Activated T-helper 2 cell treated with anti-CD3 and anti-CD28 coated beads, Interferon-gamma antibody, Interleukin-2, Interleukin-4, amounts not matched to agents 10 μg/mL and 5 μg/mL and 100 μg/mL, durations not matched to agents 14 hours and 24 hours and 36 hours (primary cell): ENCODE measurements at regions of chr5 and their contacts with region 1.

Region 1: DNA sequence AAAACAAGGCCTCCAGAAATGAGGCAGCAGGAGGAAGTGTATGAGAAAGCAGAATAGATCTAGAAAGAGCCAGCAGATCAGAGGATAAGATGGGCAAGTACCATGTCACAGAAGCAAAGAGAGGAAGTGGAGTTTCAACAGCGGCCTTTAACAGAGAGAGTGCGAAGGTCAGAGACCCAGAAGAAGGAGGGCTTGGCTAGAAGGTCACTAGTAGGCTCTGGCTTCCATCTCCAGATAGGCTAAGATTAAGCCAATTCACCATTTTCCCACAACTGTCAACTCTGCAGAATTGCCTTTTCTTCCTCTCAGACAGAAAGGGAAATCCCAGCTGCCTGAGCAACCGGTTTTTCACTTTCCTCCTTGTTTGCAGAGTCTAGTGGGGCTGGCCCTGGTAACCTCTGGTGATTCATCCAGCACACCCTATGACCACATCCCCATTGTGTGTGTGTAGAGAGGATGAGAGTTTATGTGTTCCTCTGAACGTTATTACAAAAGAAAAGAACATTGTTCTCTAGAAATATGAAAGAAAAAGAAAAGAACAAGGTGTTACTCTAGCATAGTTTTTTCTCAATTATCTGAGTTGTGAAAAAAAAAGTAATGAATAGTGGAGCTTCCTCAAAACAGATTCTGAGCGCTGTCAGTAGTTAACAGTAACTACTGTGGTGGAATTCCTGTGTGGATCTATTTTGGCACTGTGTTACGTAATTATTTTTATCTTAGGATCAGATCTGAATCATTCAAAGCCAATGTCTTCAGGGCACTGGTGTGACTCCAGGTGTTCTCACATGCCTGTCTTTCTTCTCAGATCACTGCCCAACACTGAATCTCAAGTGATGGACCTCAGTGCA is 220.4 kb downstream of the ARRDC3 start:
- DNase-seq: peak; percentile 64
- H3K4me3 Mint-ChIP-seq: peak overlapping the region; percentile 27
- H3K27ac Mint-ChIP-seq: peak overlapping the region; percentile 77
- H3K4me1 Mint-ChIP-seq: peaks cover 39% of the 10 kb centered on the region
- H3K27me3 Mint-ChIP-seq: no peaks in the 10 kb centered on the region

Region 2: DNA sequence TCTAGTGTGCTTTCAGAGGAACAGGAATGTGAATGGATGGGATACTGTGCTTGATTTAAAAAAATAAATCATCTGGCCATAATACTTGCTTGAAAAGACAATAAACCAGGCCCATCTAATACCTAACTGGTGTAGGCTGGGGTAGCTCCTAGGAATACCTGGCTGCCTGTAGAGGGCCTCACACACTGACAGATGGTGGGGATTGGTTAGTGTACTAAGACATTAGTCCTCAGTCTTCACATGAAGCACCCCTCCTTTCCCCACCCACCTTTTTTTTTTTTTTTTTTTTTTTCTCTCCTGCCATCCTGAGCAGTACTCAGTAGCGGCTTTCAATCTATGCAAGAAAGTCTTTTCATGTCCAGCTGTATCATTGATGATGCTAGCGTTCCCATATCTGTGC is 473.7 kb before region 1 on chr5:
- intact Hi-C with region 1: no loop called
- DNase-seq: no peak
- H3K4me3 Mint-ChIP-seq: no peak overlapping the region
- H3K27ac Mint-ChIP-seq: no peak overlapping the region
- H3K4me1 Mint-ChIP-seq: no peaks in the 10 kb centered on the region
- H3K27me3 Mint-ChIP-seq: no peaks in the 10 kb centered on the region

Region 3: DNA sequence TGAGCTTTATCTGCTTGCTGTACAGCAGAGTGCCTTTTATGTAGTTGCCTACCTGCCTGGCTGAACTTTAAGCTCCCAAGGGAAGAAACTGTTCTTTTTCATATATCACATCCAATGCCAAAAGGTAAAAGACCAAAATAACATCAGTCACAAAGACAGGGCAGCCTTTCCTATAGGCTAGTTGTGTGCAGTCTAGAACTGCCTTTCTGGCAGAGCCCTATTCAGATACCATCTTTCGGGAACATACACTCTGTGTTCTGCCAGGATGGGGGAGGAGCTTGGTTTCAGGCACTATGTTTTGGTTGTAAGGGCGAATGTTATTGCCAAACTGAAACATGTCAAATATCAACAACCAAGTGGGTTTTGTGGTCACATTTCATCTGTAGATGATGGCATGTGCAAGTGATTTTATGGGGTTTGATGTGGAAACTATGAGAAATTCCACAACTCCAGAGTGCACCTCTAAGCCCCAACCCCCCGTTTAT is 289.7 kb before region 1 on chr5:
- intact Hi-C with region 1: loop called (anchors 2 kb)
- DNase-seq: no peak
- H3K4me3 Mint-ChIP-seq: no peak overlapping the region
- H3K27ac Mint-ChIP-seq: peak overlapping the region; percentile 18
- H3K4me1 Mint-ChIP-seq: peaks cover 39% of the 10 kb centered on the region
- H3K27me3 Mint-ChIP-seq: peaks cover 35% of the 10 kb centered on the region

Region 4: DNA sequence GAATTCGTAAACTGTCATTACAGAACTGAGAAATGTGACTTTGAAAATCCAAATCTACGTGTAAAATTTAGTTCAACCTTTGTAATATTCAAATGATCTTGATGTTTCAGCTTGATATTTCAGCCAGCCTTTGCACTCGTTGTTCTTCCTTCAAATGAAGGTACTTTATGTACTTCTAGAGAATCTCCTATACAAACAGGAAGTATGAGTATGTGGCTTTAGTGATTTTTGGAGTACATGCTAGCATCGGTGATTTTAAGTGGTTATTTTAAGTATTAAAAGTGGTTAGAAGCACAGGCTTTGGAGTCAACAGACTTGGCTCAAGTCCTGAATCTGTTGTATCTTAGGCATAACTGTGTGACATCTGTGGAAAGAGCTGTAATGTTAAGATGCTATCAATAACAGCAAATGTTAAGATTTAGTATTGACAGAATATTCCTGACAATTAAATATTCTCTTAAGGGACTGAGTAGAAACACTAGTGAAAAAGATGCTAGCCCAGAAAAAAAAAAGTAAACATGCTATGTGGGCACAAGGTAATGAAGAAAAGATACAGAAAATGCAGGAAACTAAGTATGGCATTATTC is 206.2 kb before region 1 on chr5:
- intact Hi-C with region 1: loop called (anchors 2 kb)
- DNase-seq: no peak
- H3K4me3 Mint-ChIP-seq: peak overlapping the region; percentile 1
- H3K27ac Mint-ChIP-seq: peak overlapping the region; percentile 91
- H3K4me1 Mint-ChIP-seq: peaks cover 22% of the 10 kb centered on the region
- H3K27me3 Mint-ChIP-seq: no peaks in the 10 kb centered on the region

Region 5: DNA sequence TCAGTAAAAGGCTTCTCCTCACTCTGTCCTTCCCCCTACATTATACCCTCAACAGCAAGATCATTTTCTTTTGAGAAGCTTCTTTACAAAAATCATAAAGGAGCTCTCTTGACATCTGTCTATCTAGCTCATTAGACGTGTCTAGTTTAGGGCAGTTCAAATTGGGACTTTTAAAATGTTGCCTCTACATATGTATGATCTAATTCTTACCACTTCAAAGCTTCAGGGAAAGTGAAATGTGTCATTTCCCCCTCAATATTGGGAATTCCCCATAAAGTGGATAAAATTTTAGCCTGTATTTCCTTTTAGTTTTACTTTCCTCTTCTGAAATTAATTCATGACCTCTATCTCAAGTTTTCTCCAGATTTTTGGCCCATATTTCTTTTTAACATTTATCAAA is 103.3 kb before region 1 on chr5:
- intact Hi-C with region 1: loop called (anchors 1 kb)
- DNase-seq: no peak
- H3K4me3 Mint-ChIP-seq: no peak overlapping the region
- H3K27ac Mint-ChIP-seq: no peak overlapping the region
- H3K4me1 Mint-ChIP-seq: peaks cover 16% of the 10 kb centered on the region
- H3K27me3 Mint-ChIP-seq: peaks cover 26% of the 10 kb centered on the region

Region 6: DNA sequence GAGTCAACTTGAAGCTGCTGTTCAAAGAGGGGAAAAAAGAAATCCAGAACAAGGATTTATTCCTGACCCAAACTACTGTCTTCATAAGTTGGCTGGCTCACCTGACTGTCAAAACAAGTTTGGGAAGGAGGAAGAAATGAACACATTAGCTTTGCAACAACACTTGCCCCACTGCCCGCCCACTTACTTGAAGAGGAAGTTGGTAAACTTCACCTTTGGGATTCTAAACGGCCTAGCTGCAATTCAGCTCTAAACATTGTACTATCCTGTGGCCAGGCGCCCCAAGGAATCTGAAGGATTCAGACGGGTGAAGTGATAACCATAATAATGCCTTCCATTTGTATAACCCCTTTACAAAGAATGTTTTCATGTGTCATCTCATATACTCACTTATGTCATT is 21.0 kb after region 1 on chr5:
- intact Hi-C with region 1: loop called (anchors 2 kb)
- DNase-seq: no peak
- H3K4me3 Mint-ChIP-seq: no peak overlapping the region
- H3K27ac Mint-ChIP-seq: no peak overlapping the region
- H3K4me1 Mint-ChIP-seq: peaks cover 21% of the 10 kb centered on the region
- H3K27me3 Mint-ChIP-seq: peaks cover 16% of the 10 kb centered on the region

Region 7: GRCh38 chr5:91212714-91213092 is 49.9 kb after region 1 on chr5:
- intact Hi-C with region 1: no loop called
- DNase-seq: no peak
- H3K4me3 Mint-ChIP-seq: no peak overlapping the region
- H3K27ac Mint-ChIP-seq: no peak overlapping the region
- H3K4me1 Mint-ChIP-seq: no peaks in the 10 kb centered on the region
- H3K27me3 Mint-ChIP-seq: peaks cover 8% of the 10 kb centered on the region

Region 8: DNA sequence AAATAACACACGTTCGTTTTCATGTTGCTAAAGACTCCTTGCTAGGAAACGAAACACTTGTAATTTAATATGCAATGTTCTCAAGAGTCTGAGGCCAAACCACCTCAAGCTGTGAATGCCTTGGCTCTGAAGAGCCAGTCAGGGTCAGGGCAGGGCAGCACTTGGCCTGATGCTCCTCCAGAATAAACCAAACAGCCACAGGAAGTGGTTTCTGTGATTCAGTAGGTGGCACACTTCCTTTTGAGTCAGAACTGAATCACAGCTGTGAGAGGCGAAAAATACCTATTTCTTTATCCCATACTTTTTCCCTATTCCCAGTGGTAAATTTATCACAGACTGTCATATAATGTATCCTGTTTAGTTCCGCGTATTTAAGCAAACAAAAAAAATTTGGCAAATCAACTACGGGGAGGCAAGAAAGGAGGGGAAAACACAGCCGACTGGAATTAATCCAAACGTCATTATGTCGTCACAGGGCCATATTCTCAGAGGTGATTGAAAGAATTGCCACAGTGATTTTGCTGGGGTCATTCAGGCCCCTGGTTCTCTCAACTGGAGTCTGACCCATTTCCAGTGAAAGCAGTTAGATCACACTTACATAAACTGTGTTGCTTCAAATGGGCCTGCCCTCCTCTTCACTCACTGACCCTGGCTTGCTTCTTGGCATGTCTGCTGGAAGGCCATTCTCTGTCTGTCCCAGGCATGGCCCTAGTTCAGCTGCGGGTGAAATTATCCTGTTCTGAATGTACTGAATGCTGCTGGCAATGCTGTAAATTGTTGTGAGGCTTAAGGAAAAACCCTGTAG is 149.1 kb after region 1 on chr5:
- intact Hi-C with region 1: loop called (anchors 2 kb)
- DNase-seq: peak; percentile 59
- H3K4me3 Mint-ChIP-seq: no peak overlapping the region
- H3K27ac Mint-ChIP-seq: peak overlapping the region; percentile 69
- H3K4me1 Mint-ChIP-seq: peaks cover 44% of the 10 kb centered on the region
- H3K27me3 Mint-ChIP-seq: no peaks in the 10 kb centered on the region